B cell (primary cell): ENCODE measurements at regions of chr6 and their contacts with region 1.

Region 1: DNA sequence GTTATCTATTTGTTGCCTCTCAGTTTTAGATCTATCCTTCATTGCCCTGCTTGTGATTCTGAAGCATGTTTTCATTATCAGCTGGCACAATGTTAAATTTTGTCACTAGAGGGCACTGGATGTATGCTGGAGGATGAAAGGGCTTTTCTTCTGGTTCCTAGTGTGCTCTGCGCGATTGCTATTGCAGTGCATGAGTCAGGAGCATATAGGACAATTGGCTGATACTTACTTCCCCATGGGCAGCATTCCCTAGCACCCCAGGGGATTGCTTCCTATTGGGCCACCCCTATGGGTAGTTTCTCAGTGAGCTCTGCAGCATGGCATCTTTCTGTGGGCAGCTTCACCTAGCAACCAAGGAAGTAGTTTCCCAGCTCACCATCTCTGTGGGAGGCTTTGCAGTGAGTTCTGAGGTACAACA is 280.3 kb upstream of the SYNCRIP start:
- DNase-seq: peak; percentile 11
- ATAC-seq: no peak
- H3K4me3 ChIP-seq: no peak overlapping the region
- H3K4me3 Mint-ChIP-seq: no peak overlapping the region
- H3K27ac ChIP-seq: no peak overlapping the region
- H3K27ac Mint-ChIP-seq: no peak overlapping the region
- H3K4me1 ChIP-seq: no peaks in the 10 kb centered on the region
- H3K4me1 Mint-ChIP-seq: no peaks in the 10 kb centered on the region
- H3K27me3 ChIP-seq: no peaks in the 10 kb centered on the region
- H3K27me3 Mint-ChIP-seq: no peaks in the 10 kb centered on the region
- CTCF ChIP-seq: no peak

Region 2: DNA sequence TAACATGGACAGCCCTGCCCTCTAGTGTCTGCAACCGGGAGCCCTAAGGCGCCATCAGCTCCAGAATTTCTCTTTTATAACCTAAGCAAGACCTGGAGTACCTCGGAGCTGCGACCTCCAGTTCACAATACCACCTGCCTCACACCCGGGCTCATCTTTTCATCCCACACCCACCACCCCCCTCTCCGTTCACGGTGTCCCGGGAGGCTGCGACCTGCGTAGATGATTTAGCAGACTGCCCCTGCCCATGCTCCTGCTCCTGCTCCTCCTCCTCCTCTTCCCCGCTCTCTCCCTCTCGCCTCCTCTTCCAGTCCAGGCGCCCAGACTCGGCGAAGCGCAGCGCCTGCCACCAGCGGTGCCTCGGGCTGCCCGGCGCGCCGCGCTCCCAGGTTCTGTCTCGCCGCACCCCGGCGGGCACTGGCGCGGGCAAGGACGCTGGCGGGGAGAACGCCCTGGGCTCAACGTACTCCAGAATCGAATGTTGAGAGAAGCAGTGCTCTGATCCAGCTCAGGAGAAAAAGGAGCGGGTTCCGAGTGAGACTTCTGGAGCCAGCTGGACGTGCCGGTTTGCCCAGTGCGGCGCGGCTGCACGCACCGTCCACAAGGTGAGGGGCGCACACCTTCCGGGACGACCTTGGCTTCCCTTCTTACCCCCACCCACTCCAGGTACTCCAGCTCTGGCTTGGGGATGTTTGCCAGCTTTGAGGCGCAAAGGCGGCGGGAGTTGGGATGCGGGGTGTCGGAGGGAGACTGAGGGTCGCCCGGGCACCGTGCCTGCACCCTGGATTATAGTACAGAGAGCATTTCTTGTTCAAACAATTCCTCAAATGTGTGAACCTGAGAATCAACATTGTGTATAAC is 1014.4 kb after region 1 on chr6 and contains the start of gene HTR1E:
- CTCF ChIA-PET with region 1: no interaction called
- POLR2A ChIA-PET with region 1: no interaction called
- intact Hi-C with region 1: loop called (anchors 5 kb)
- DNase-seq: peak; percentile 27
- ATAC-seq: no peak
- H3K4me3 ChIP-seq: peak within 1 kb of the TSS in 2 of 5 experiments; percentile 39 to 47
- H3K4me3 Mint-ChIP-seq: peak within 1 kb of the TSS; percentile 73
- H3K27ac ChIP-seq: no peak within 1 kb of the TSS
- H3K27ac Mint-ChIP-seq: no peak within 1 kb of the TSS
- H3K4me1 ChIP-seq: peaks cover 12 to 14% of the 10 kb centered on the region in 2 donors
- H3K4me1 Mint-ChIP-seq: peaks cover 19% of the 10 kb centered on the region
- H3K27me3 ChIP-seq: peaks cover 0 to 32% (median 19%) of the 10 kb centered on the region in 4 experiments
- H3K27me3 Mint-ChIP-seq: peaks cover 57% of the 10 kb centered on the region
- CTCF ChIP-seq: peak; percentile 2
- total RNA-seq, gene HTR1E: not detected in 2 replicates